CD4-positive, alpha-beta memory T cell (primary cell): ENCODE measurements at regions of chr13 and their contacts with region 1.

Region 1: GRCh38 chr13:42991892-42992763 is at the start of gene EPSTI1:
- DNase-seq: peak; percentile 79 to 84 (median 81)
- H3K4me3 ChIP-seq: peak within 1 kb of the TSS; percentile 73 to 88
- H3K4me3 Mint-ChIP-seq: peak within 1 kb of the TSS; percentile 93 to 97 (median 96)
- H3K27ac ChIP-seq: peak within 1 kb of the TSS; percentile 95
- H3K27ac Mint-ChIP-seq: peak within 1 kb of the TSS; percentile 99 to 100 (median 99)
- H3K4me1 ChIP-seq: peaks cover 40% of the 10 kb centered on the region
- H3K4me1 Mint-ChIP-seq: peaks cover 35 to 63% (median 41%) of the 10 kb centered on the region in 4 donors
- H3K27me3 ChIP-seq: no peaks in the 10 kb centered on the region
- H3K27me3 Mint-ChIP-seq: no peaks in the 10 kb centered on the region
- total RNA-seq, gene EPSTI1: 17.1 to 19.4 TPM

Region 2: DNA sequence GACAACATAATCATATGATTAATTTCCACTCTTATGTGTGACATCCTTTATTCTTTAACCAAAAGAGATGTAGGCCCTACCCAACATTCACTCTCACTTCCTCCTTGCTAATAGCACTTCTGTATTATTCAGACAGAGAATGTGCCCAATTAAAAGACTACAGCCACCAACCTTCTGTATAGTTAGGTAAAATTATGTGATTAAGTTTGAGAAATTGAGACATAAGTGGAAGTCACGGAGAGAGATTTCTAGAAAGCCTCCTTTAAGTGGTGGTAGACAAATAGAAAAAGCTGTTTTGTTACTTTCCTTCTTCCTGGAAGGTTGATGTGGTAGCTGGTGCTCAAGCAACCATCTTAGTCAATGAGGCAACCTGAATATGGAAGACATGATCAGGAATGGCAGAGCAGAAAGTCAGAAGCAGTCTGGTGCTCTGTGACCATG is 14.9 kb before region 1 on chr13:
- CTCF ChIA-PET with region 1: interaction called, 39 read pairs
- POLR2A ChIA-PET with region 1: interaction called, 23 read pairs
- intact Hi-C with region 1: no loop called
- DNase-seq: no peak
- H3K4me3 ChIP-seq: no peak overlapping the region
- H3K4me3 Mint-ChIP-seq: no peak overlapping the region
- H3K27ac ChIP-seq: no peak overlapping the region
- H3K27ac Mint-ChIP-seq: peak overlapping the region in 4 of 7 donors; percentile 50 to 63 (median 52)
- H3K4me1 ChIP-seq: peaks cover 4% of the 10 kb centered on the region
- H3K4me1 Mint-ChIP-seq: peaks cover 13 to 26% (median 16%) of the 10 kb centered on the region in 4 donors
- H3K27me3 ChIP-seq: no peaks in the 10 kb centered on the region
- H3K27me3 Mint-ChIP-seq: no peaks in the 10 kb centered on the region

Region 3: GRCh38 chr13:43023289-43023951 is 31.3 kb after region 1 on chr13 and contains the start of gene DNAJC15:
- CTCF ChIA-PET with region 1: interaction called, 7 read pairs
- POLR2A ChIA-PET with region 1: interaction called, 97 read pairs
- intact Hi-C with region 1: loop called (anchors 1 kb)
- DNase-seq: peak; percentile 81 to 87 (median 84)
- H3K4me3 ChIP-seq: peak within 1 kb of the TSS; percentile 85 to 92
- H3K4me3 Mint-ChIP-seq: peak within 1 kb of the TSS; percentile 90 to 100 (median 98)
- H3K27ac ChIP-seq: peak within 1 kb of the TSS; percentile 66
- H3K27ac Mint-ChIP-seq: peak within 1 kb of the TSS; percentile 87 to 99 (median 98)
- H3K4me1 ChIP-seq: peaks cover 35% of the 10 kb centered on the region
- H3K4me1 Mint-ChIP-seq: peaks cover 19 to 42% (median 32%) of the 10 kb centered on the region in 4 donors
- H3K27me3 ChIP-seq: no peaks in the 10 kb centered on the region
- H3K27me3 Mint-ChIP-seq: no peaks in the 10 kb centered on the region
- total RNA-seq, gene DNAJC15: 9.7 to 11.1 TPM

Region 4: GRCh38 chr13:43044720-43045301 is 52.7 kb after region 1 on chr13:
- CTCF ChIA-PET with region 1: interaction called, 3 read pairs
- POLR2A ChIA-PET with region 1: interaction called, 14 read pairs
- intact Hi-C with region 1: no loop called
- DNase-seq: no peak
- H3K4me3 ChIP-seq: no peak overlapping the region
- H3K4me3 Mint-ChIP-seq: peak overlapping the region; percentile 38 to 80 (median 55)
- H3K27ac ChIP-seq: peak overlapping the region; percentile 16
- H3K27ac Mint-ChIP-seq: peak overlapping the region; percentile 64 to 88 (median 77)
- H3K4me1 ChIP-seq: peaks cover 36% of the 10 kb centered on the region
- H3K4me1 Mint-ChIP-seq: peaks cover 39 to 80% (median 56%) of the 10 kb centered on the region in 4 donors
- H3K27me3 ChIP-seq: no peaks in the 10 kb centered on the region
- H3K27me3 Mint-ChIP-seq: no peaks in the 10 kb centered on the region

Region 5: DNA sequence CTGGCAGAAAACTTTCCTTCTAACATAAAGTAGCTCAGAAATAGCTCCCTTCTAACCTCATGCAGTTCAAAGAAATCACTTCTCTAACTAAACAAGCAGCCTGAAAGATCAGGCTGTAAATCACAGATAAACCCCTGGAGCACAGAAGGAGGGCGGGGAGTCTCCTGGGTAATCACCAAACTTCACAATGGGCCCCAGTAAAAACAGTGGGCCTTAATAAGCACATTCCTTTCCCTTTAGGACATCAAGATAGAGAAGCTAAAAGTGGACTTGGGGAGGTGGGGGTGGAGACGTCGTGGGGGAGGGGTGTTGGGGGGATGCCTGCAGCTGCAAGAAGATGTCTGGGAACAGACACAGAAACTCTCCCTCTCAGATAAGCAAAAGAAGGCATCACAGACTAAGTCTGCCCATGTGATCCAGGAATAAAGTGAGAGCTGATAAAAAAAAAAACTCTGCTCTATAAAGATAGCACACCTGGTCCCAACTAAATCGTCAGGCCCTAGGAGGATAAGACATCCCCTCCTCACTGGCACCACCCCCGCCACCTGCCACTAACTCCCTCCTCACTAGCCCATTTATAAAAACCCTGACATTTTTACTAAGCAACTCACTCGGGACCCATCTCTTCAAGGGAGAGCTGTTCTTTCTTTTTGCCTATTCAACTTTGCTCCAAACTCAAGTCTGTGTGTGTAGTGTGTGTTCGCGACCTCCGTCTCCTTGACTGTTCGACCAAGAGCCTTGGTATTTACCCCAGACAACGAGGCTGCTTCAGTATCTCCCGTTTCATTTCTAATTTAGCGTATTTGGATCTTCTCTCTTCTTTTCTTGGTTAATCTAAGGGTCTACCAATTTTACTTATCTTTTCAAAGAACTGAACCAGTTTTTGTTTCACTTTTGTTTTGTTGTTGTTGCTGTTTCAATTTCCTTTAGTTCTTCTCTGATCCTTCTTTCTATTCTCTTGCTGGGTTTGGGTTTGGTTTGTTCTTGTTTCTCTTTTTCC is 63.0 kb after region 1 on chr13:
- CTCF ChIA-PET with region 1: interaction called, 9 read pairs
- POLR2A ChIA-PET with region 1: interaction called, 97 read pairs
- intact Hi-C with region 1: loop called (anchors 2 kb)
- DNase-seq: peak in 4 of 5 donors; percentile 39 to 52 (median 46)
- H3K4me3 ChIP-seq: peak overlapping the region; percentile 62 to 78
- H3K4me3 Mint-ChIP-seq: no peak overlapping the region
- H3K27ac ChIP-seq: peak overlapping the region; percentile 85
- H3K27ac Mint-ChIP-seq: no peak overlapping the region
- H3K4me1 ChIP-seq: peaks cover 51% of the 10 kb centered on the region
- H3K4me1 Mint-ChIP-seq: peaks cover 6 to 30% (median 18%) of the 10 kb centered on the region in 4 donors
- H3K27me3 ChIP-seq: no peaks in the 10 kb centered on the region
- H3K27me3 Mint-ChIP-seq: no peaks in the 10 kb centered on the region

Region 6: GRCh38 chr13:43085545-43085944 is 93.4 kb after region 1 on chr13:
- CTCF ChIA-PET with region 1: interaction called, 5 read pairs
- POLR2A ChIA-PET with region 1: interaction called, 12 read pairs
- intact Hi-C with region 1: loop called (anchors 5 kb)
- DNase-seq: peak in 3 of 5 donors; percentile 6 to 23 (median 22)
- H3K4me3 ChIP-seq: no peak overlapping the region
- H3K4me3 Mint-ChIP-seq: no peak overlapping the region
- H3K27ac ChIP-seq: no peak overlapping the region
- H3K27ac Mint-ChIP-seq: no peak overlapping the region
- H3K4me1 ChIP-seq: no peaks in the 10 kb centered on the region
- H3K4me1 Mint-ChIP-seq: peaks cover 0 to 18% (median 7%) of the 10 kb centered on the region in 4 donors
- H3K27me3 ChIP-seq: no peaks in the 10 kb centered on the region
- H3K27me3 Mint-ChIP-seq: no peaks in the 10 kb centered on the region